Activated CD8-positive, alpha-beta T cell treated with anti-CD3 and anti-CD28 coated beads, Interleukin-2, amount 10 ng/mL, durations not matched to agents 7 days and 5 days (primary cell): ENCODE measurements at regions of chr9 and their contacts with region 1.

Region 1: GRCh38 chr9:93464395-93464794 is 11.0 kb upstream of the FAM120AOS start:
- DNase-seq: no peak
- ATAC-seq: peak; percentile 28
- H3K4me3 Mint-ChIP-seq: peak overlapping the region; percentile 67
- H3K27ac Mint-ChIP-seq: peak overlapping the region; percentile 92
- H3K4me1 Mint-ChIP-seq: peaks cover 86% of the 10 kb centered on the region
- H3K27me3 Mint-ChIP-seq: no peaks in the 10 kb centered on the region

Region 2: GRCh38 chr9:93453047-93453914 is 11.1 kb before region 1 on chr9 and contains the start of gene FAM120AOS:
- CTCF ChIA-PET with region 1: interaction called, 42 read pairs
- POLR2A ChIA-PET with region 1: interaction called, 50 read pairs
- DNase-seq: peak; percentile 91
- ATAC-seq: peak; percentile 77
- H3K4me3 Mint-ChIP-seq: peak within 1 kb of the TSS; percentile 89
- H3K27ac Mint-ChIP-seq: peak within 1 kb of the TSS; percentile 92
- H3K4me1 Mint-ChIP-seq: peaks cover 55% of the 10 kb centered on the region
- H3K27me3 Mint-ChIP-seq: no peaks in the 10 kb centered on the region
- total RNA-seq, gene FAM120AOS: 35.1 to 36.5 TPM

Region 3: GRCh38 chr9:93486269-93486668 is 21.9 kb after region 1 on chr9:
- CTCF ChIA-PET with region 1: no interaction called
- POLR2A ChIA-PET with region 1: no interaction called
- DNase-seq: no peak
- ATAC-seq: no peak
- H3K4me3 Mint-ChIP-seq: no peak overlapping the region
- H3K27ac Mint-ChIP-seq: no peak overlapping the region
- H3K4me1 Mint-ChIP-seq: peaks cover 13% of the 10 kb centered on the region
- H3K27me3 Mint-ChIP-seq: no peaks in the 10 kb centered on the region